ENCODE measurements at regions of chr15 and their contacts with region 1.

Region 1: DNA sequence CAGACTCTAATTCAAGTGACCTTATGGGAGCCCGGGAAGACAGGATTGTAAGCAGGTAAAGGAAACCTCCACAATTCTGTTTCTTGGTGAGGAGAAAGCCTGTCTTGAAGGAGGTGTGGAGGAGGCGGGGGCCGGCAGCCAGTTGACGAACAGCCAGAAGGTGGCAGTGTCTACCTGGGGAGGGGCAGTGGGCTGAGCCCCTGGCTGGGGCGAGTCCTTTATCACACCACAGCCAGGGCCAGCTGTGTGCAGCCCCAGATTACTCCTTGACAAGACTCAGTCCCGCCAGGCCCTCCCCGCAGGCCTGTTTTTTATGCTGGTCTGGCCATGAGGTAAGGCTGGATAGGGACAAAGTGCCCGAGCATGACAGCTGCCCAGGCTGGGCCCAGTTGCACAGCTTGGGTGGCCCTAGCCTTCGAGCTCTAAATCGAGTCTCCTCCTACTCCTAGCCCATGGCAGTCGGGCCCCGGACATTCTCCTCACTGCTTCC is 40.9 kb upstream of the IDH2 start:
- DNase-seq: peak; percentile 79
- ATAC-seq: peak; percentile 84
- H3K4me3 Mint-ChIP-seq: peak overlapping the region; percentile 12
- H3K27ac Mint-ChIP-seq: peak overlapping the region; percentile 61
- H3K4me1 Mint-ChIP-seq: peaks cover 40% of the 10 kb centered on the region
- H3K27me3 Mint-ChIP-seq: no peaks in the 10 kb centered on the region

Region 2: GRCh38 chr15:90086868-90087268 is 56.3 kb before region 1 on chr15:
- CTCF ChIA-PET with region 1: no interaction called
- POLR2A ChIA-PET with region 1: no interaction called
- DNase-seq: peak; percentile 70
- ATAC-seq: peak; percentile 73
- H3K4me3 Mint-ChIP-seq: no peak overlapping the region
- H3K27ac Mint-ChIP-seq: peak overlapping the region; percentile 63
- H3K4me1 Mint-ChIP-seq: peaks cover 15% of the 10 kb centered on the region
- H3K27me3 Mint-ChIP-seq: no peaks in the 10 kb centered on the region

Region 3: GRCh38 chr15:90101969-90102890 is 41.0 kb before region 1 on chr15 and contains the start of gene IDH2:
- CTCF ChIA-PET with region 1: interaction called, 11 read pairs
- POLR2A ChIA-PET with region 1: interaction called, 5 read pairs
- DNase-seq: peak; percentile 75
- ATAC-seq: peak; percentile 85
- H3K4me3 Mint-ChIP-seq: peak within 1 kb of the TSS; percentile 93
- H3K27ac Mint-ChIP-seq: peak within 1 kb of the TSS; percentile 99
- H3K4me1 Mint-ChIP-seq: peaks cover 54% of the 10 kb centered on the region
- H3K27me3 Mint-ChIP-seq: peaks cover 5% of the 10 kb centered on the region
- total RNA-seq, gene IDH2: 291 to 301 TPM

Region 4: GRCh38 chr15:90201130-90201949 is 58.1 kb after region 1 on chr15 and contains the start of gene SEMA4B:
- CTCF ChIA-PET with region 1: interaction called, 13 read pairs
- POLR2A ChIA-PET with region 1: no interaction called
- DNase-seq: peak; percentile 78
- ATAC-seq: peak; percentile 93
- H3K4me3 Mint-ChIP-seq: peak within 1 kb of the TSS; percentile 80
- H3K27ac Mint-ChIP-seq: peak within 1 kb of the TSS; percentile 80
- H3K4me1 Mint-ChIP-seq: peaks cover 26% of the 10 kb centered on the region
- H3K27me3 Mint-ChIP-seq: peaks cover 4% of the 10 kb centered on the region
- total RNA-seq, gene SEMA4B: 8.6 to 11.2 TPM

Region 5: DNA sequence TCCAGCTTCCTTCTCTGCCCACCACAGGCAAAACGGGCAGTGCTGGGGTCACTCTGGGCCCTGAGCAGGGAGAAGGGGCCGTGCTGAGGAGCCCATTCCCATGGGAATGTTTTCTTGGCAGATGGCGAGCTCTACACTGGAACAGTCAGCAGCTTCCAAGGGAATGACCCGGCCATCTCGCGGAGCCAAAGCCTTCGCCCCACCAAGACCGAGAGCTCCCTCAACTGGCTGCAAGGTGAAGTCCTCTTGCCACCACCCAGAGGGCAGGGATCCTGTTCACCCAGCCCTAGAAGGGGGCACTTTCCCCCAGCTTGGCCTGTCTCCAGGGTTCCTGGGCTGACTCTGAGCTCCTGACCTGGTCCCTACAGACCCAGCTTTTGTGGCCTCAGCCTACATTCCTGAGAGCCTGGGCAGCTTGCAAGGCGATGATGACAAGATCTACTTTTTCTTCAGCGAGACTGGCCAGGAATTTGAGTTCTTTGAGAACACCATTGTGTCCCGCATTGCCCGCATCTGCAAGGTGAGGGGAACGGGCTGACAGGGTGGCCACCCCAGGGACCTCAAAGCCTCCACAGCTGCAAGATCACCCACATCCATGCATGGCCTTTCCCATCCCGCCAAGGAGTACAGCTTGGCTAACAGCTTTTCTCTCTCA is 78.2 kb after region 1 on chr15:
- CTCF ChIA-PET with region 1: interaction called, 29 read pairs
- POLR2A ChIA-PET with region 1: no interaction called
- DNase-seq: peak; percentile 52
- ATAC-seq: peak; percentile 43
- H3K4me3 Mint-ChIP-seq: no peak overlapping the region
- H3K27ac Mint-ChIP-seq: no peak overlapping the region
- H3K4me1 Mint-ChIP-seq: peaks cover 20% of the 10 kb centered on the region
- H3K27me3 Mint-ChIP-seq: no peaks in the 10 kb centered on the region

Region 6: DNA sequence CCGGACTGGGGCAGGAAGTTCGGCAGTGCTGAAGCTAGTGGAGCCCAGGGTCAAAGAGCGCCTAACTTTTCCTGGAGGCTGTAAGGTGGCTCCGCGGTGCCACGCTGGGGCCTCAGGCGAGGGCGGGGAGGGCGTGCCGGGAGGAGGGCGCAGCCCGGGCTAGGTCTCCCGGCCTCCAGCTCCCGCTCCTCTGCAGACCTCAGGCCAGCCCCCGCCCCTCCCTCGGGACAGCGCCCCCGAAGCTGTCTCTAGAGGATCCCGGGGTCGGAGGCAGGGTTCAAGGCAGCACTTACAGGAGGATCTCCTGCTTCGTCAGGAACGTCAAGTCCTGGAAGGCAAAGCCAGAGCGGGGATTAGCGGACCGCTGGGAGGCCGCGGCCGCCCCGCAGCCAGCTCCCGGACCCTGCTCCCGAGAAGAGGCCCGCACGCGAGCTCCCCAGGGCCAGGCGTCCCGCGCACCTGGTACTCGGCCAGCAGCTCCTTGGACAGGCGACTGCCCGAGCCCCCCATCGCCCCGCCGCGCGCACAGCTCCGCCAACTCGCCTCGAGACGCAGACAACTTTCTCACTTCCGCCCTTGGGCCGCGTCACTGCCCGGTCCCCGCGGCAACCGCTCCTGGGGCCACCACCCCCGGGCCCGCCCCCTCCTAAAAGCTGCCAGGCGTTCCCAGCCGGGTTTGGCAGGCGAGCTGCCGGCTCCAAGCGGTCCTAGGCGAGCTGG is 90.3 kb after region 1 on chr15 and contains the start of gene CIB1:
- CTCF ChIA-PET with region 1: interaction called, 21 read pairs
- POLR2A ChIA-PET with region 1: no interaction called
- DNase-seq: peak; percentile 97
- ATAC-seq: peak; percentile 85
- H3K4me3 Mint-ChIP-seq: peak within 1 kb of the TSS; percentile 92
- H3K27ac Mint-ChIP-seq: peak within 1 kb of the TSS; percentile 93
- H3K4me1 Mint-ChIP-seq: peaks cover 56% of the 10 kb centered on the region
- H3K27me3 Mint-ChIP-seq: no peaks in the 10 kb centered on the region
- total RNA-seq, gene CIB1: 92.4 to 102 TPM